IMR-90 (cell line): ENCODE measurements at regions of chr10 and their contacts with region 1.

Region 1: DNA sequence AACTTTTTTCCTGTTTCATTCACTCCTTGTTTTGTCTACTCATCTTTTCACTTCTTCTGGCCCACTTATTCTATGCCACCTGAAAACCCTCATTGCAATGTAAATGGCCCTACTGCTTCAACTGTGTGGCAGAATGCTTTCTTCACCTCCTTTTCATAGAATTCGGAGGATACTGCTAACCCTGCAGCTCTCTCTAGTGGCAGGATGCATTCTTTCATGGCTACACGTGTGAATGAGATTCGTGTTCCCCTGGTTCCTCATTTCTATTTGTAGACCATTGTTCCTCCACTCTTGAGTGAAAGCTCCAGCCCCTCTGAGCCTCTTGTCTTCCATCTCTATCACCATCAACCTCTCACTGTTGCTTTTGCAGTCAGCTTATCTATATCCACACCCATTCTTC is 20.9 kb upstream of the CYP26C1 start:
- DNase-seq: peak; percentile 46
- ATAC-seq: peak; percentile 82
- H3K4me3 ChIP-seq: no peak overlapping the region
- H3K27ac ChIP-seq: no peak overlapping the region
- H3K4me1 ChIP-seq: no peaks in the 10 kb centered on the region; the same call in 1 of the 2 replicates
- H3K27me3 ChIP-seq: no peaks in the 10 kb centered on the region
- CTCF ChIP-seq: peak; percentile 69
- POLR2A ChIP-seq: no peak
- RAD21 ChIP-seq: peak; percentile 78

Region 2: DNA sequence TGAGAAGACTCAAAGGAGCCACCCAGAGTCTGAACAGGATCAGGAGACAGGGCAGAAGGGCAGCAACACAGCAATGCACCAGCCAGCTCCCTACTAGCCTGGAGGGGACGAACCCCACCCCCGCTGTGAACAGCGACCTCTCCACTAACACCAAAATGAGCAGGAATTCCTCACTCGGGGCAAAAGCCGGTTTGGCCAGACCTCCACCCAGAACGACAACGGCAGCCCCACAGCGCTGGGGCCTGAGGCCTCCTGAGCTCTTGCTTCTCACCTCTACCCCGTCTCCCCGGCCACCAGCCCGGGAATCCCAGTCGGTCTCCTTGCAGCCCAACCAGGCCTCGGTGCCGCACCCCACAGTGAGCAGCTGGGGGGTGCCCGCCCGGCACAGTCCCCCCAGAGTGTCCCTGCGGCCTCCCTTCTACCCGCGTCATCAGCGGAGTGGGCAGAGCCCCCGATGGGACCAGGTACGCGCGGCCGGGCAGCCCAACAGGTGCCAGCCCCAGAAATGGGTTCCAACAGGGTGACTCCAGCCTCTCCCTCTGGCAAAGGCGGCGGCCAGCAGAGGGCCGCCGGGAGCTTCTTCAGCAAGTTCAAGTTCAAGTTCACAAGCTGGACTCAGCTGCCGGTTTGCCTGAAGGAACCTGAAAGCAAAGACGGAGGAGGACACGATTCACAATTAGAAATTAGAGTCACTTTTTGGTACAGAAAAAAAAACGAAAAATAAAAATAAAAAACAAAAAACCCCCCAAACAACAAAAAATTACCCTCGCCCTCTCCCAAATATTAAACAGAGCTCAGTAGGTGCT is 619.8 kb before region 1 on chr10:
- CTCF ChIA-PET with region 1: no interaction called
- POLR2A ChIA-PET with region 1: no interaction called
- dilution Hi-C with region 1: no loop called
- in situ Hi-C with region 1: no loop called
- intact Hi-C with region 1: no loop called
- DNase-seq: peak; percentile 31
- ATAC-seq: peak; percentile 81
- H3K4me3 ChIP-seq: no peak overlapping the region; the same call in 1 of the 2 replicates
- H3K27ac ChIP-seq: no peak overlapping the region
- H3K4me1 ChIP-seq: no peaks in the 10 kb centered on the region
- H3K27me3 ChIP-seq: peaks cover 14% of the 10 kb centered on the region
- CTCF ChIP-seq: peak; percentile 29; the same call in 1 of the 2 replicates
- POLR2A ChIP-seq: no peak
- RAD21 ChIP-seq: no peak

Region 3: DNA sequence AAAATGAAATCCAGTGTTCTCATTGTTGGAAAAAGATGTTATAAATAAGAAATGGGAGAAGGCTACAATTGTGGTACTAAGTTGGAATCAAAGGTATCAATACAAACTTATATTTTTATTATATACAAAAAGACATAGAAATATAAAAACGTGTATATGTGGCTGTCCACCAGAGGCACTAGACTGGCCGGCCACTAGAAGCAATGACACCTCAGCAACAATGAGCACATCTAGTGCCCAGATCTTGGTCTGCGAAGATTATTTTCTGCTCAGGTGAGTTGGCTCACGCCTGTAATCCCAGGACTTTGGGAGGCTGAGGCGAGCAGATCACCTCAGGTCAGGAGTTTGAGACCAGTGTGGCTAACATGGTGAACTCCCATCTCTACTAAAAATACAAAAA is 487.4 kb before region 1 on chr10:
- CTCF ChIA-PET with region 1: no interaction called
- POLR2A ChIA-PET with region 1: no interaction called
- dilution Hi-C with region 1: no loop called
- in situ Hi-C with region 1: no loop called
- intact Hi-C with region 1: no loop called
- DNase-seq: no peak
- ATAC-seq: no peak
- H3K4me3 ChIP-seq: no peak overlapping the region
- H3K27ac ChIP-seq: no peak overlapping the region
- H3K4me1 ChIP-seq: no peaks in the 10 kb centered on the region
- H3K27me3 ChIP-seq: no peaks in the 10 kb centered on the region
- CTCF ChIP-seq: no peak; the same call in 1 of the 2 replicates
- POLR2A ChIP-seq: no peak
- RAD21 ChIP-seq: no peak

Region 4: GRCh38 chr10:92816091-92816531 is 223.6 kb before region 1 on chr10:
- CTCF ChIA-PET with region 1: no interaction called
- POLR2A ChIA-PET with region 1: no interaction called
- dilution Hi-C with region 1: no loop called
- in situ Hi-C with region 1: no loop called
- intact Hi-C with region 1: no loop called
- DNase-seq: peak; percentile 73
- ATAC-seq: peak; percentile 70
- H3K4me3 ChIP-seq: no peak overlapping the region
- H3K27ac ChIP-seq: peak overlapping the region; percentile 51; the same call in 1 of the 2 replicates
- H3K4me1 ChIP-seq: peaks cover 11% of the 10 kb centered on the region
- H3K27me3 ChIP-seq: no peaks in the 10 kb centered on the region
- CTCF ChIP-seq: no peak
- POLR2A ChIP-seq: no peak
- RAD21 ChIP-seq: no peak

Region 5: GRCh38 chr10:92914478-92915325 is 125.0 kb before region 1 on chr10:
- CTCF ChIA-PET with region 1: no interaction called
- POLR2A ChIA-PET with region 1: no interaction called
- dilution Hi-C with region 1: no loop called
- in situ Hi-C with region 1: no loop called
- intact Hi-C with region 1: loop called (anchors 1 kb)
- DNase-seq: peak; percentile 50
- ATAC-seq: peak; percentile 98
- H3K4me3 ChIP-seq: no peak overlapping the region
- H3K27ac ChIP-seq: no peak overlapping the region
- H3K4me1 ChIP-seq: no peaks in the 10 kb centered on the region
- H3K27me3 ChIP-seq: no peaks in the 10 kb centered on the region
- CTCF ChIP-seq: peak; percentile 73
- POLR2A ChIP-seq: no peak
- RAD21 ChIP-seq: peak; percentile 61

Region 6: DNA sequence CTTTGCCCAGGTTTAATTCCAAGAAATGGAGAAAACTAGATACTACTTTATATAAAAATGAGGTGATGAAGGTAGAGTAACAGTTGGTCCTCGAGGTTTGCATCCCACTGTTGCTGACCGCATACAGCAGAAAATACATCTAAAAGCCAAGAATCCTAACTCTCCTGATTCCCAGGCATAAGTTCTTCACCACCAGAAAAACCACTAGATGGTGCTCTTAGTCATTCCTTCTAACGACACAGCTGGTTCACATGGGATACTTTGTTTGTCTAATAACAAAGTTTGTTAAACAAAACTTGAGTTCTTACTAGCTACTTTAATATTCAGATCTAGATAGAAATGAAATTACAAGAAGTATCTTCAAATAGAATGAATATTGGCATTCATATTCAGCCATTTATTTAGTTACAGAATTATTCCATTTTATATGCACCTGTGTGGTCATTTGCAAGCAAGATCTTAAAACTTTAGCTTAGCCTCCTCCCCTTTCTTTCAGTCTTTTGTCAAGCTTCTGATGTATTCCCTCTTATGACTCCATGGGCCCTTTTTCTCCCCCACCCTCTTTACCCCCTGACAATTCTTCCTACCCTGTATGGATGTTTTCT is 33.2 kb before region 1 on chr10:
- CTCF ChIA-PET with region 1: interaction called, 3 read pairs
- POLR2A ChIA-PET with region 1: no interaction called
- dilution Hi-C with region 1: no loop called
- in situ Hi-C with region 1: no loop called
- intact Hi-C with region 1: loop called (anchors 1 kb)
- DNase-seq: peak; percentile 75
- ATAC-seq: peak; percentile 85
- H3K4me3 ChIP-seq: no peak overlapping the region
- H3K27ac ChIP-seq: no peak overlapping the region
- H3K4me1 ChIP-seq: peaks cover 2% of the 10 kb centered on the region; the same call in 1 of the 2 replicates
- H3K27me3 ChIP-seq: no peaks in the 10 kb centered on the region
- CTCF ChIP-seq: peak; percentile 71
- POLR2A ChIP-seq: no peak
- RAD21 ChIP-seq: peak; percentile 76